ENCODE measurements at regions of chr14 and their contacts with region 1.

Region 1: DNA sequence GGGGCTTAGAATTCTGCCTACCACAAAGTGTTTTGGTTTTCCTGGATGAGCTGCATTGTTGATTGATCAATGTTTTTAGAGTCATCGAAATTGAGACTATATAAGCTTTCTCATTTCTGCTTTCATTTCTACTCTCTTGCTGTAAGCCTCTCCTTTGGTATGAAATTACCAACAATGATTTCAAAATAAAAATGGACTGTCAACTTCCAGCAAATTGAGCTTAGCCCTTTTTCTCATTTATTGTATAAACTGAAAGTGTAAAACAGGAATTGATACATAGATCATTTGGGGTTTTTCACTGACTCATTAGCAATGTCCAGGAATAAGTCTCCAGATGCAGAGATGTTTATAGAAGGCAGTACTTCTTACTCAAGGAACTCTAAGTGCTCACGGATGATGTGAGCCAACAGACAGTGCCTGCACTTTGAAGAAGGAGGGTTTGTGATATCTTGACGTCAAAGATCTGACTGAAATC is 20.0 kb upstream of the PCNX1 start:
- DNase-seq: no peak
- H3K4me3 Mint-ChIP-seq: peak overlapping the region; percentile 68
- H3K27ac Mint-ChIP-seq: peak overlapping the region; percentile 96
- H3K4me1 Mint-ChIP-seq: peaks cover 93% of the 10 kb centered on the region
- H3K27me3 Mint-ChIP-seq: no peaks in the 10 kb centered on the region

Region 2: GRCh38 chr14:70640938-70641547 is 246.2 kb before region 1 on chr14:
- intact Hi-C with region 1: loop called (anchors 5 kb)
- DNase-seq: peak; percentile 36
- H3K4me3 Mint-ChIP-seq: peak overlapping the region; percentile 87
- H3K27ac Mint-ChIP-seq: peak overlapping the region; percentile 76
- H3K4me1 Mint-ChIP-seq: peaks cover 49% of the 10 kb centered on the region
- H3K27me3 Mint-ChIP-seq: peaks cover 3% of the 10 kb centered on the region

Region 3: DNA sequence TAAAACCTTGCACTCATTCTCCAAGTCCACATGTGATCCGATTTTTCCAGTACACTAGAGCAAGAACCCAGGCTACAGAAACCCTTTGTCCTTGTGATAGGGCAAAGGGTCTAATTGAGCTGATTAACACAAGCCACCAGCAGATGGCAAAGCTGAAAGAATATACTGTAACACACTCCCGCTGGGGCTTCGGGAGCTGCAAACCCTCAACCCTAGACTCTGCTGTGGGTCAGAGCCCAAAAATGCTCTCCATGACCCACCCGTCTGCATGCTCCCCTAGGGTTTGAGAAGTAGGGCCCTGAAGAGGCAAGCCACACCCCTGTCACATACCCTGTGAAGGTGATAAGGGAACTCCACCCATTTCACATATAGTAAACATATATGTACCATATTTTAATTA is 13.6 kb before region 1 on chr14:
- intact Hi-C with region 1: loop called (anchors 1 kb)
- DNase-seq: no peak
- H3K4me3 Mint-ChIP-seq: no peak overlapping the region
- H3K27ac Mint-ChIP-seq: no peak overlapping the region
- H3K4me1 Mint-ChIP-seq: peaks cover 12% of the 10 kb centered on the region
- H3K27me3 Mint-ChIP-seq: no peaks in the 10 kb centered on the region

Region 4: DNA sequence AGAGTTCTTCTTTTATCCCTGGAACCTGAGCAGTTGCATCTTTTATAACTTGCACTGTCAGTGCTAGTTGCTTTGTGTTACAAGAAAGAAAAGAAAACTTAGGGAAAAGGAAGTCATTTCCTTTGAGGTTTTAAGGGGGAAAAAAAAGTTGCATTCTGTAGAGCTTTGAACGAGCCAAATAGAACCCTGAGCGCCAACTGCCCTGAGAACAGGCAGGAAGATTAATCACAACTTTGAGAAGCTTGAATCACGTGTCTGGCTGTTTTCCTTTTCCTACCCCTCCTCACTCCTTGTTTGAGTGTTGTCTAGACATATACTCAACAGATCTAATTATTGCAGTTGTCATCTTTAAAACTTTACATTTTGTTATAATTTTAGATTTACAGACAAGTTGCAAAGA is 32.5 kb after region 1 on chr14:
- intact Hi-C with region 1: loop called (anchors 5 kb)
- DNase-seq: no peak
- H3K4me3 Mint-ChIP-seq: peak overlapping the region; percentile 7
- H3K27ac Mint-ChIP-seq: no peak overlapping the region
- H3K4me1 Mint-ChIP-seq: peaks cover 69% of the 10 kb centered on the region
- H3K27me3 Mint-ChIP-seq: no peaks in the 10 kb centered on the region

Region 5: GRCh38 chr14:71138448-71139293 is 251.4 kb after region 1 on chr14:
- intact Hi-C with region 1: loop called (anchors 2 kb)
- DNase-seq: peak; percentile 48
- H3K4me3 Mint-ChIP-seq: no peak overlapping the region
- H3K27ac Mint-ChIP-seq: no peak overlapping the region
- H3K4me1 Mint-ChIP-seq: peaks cover 48% of the 10 kb centered on the region
- H3K27me3 Mint-ChIP-seq: no peaks in the 10 kb centered on the region

Region 6: DNA sequence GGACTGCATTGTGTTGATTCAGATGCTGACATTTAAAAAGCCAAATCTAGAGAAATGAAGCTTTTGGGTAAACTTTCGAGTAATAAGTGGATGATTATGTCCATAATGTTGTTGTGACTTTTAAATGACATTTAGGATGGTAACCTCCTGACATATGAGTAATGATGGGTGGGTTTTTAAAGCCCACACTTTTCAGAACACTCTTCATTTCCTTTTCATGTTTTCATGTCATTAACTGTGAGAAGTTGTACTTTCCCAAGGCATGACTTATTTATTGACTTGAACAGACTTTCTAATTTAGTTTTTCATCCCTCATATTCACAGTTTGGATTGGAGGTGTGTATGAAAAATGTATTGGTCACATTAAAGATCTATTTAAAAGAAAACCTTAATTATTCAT is 1080.5 kb after region 1 on chr14:
- intact Hi-C with region 1: loop called (anchors 5 kb)
- DNase-seq: no peak
- H3K4me3 Mint-ChIP-seq: peak overlapping the region; percentile 3
- H3K27ac Mint-ChIP-seq: peak overlapping the region; percentile 88
- H3K4me1 Mint-ChIP-seq: peaks cover 26% of the 10 kb centered on the region
- H3K27me3 Mint-ChIP-seq: peaks cover 14% of the 10 kb centered on the region

Measured in activated T-helper 2 cell treated with anti-CD3 and anti-CD28 coated beads, Interferon-gamma antibody, Interleukin-2, Interleukin-4, amounts not matched to agents 10 μg/mL and 5 μg/mL and 100 μg/mL, durations not matched to agents 14 hours and 24 hours and 36 hours (primary cell).